ENCODE measurements at regions of chr2 and their contacts with region 1.

Region 1: DNA sequence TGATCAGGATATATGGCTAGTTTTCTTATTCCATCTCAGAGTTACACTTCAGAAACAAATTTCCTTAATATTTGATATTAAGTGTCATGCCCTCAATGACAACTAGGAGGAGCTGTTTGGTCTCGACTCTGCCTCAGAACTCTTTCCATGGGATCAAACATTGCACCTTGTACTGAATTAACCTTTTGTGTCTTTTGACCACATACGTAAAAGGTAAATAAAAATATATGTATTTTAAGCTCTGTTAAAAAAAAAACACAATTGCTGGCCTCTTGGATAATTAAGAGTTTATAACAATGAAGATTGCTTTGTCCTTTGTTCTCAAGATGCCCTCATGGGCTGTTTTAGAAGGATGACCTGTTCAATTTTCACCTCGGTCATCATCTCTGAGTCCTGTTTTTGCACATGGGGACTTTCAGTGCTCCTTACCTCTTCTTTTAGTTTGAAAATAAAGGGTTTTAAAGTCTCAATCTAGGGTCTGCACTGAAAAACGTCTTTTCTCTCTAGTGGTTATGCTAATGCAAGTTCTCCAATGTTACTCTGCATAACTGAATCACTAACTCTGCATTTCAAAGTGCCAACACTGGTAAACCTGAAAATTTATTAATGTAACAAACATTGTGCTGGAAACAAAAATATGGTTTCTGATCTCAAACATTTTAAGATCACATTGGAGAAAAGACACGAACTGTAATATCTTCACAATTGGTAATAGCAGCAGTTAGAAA is 18.8 kb upstream of the FN1 start:
- DNase-seq: peak; percentile 12
- ATAC-seq: peak; percentile 64; the same call in 1 of the 2 replicates
- H3K4me3 ChIP-seq: no peak overlapping the region
- H3K27ac ChIP-seq: no peak overlapping the region
- H3K4me1 ChIP-seq: no peaks in the 10 kb centered on the region
- H3K27me3 ChIP-seq: no peaks in the 10 kb centered on the region
- CTCF ChIP-seq: peak; percentile 64 to 75 (median 72); a peak in 5 of 6 replicates
- POLR2A ChIP-seq: no peak
- RAD21 ChIP-seq: peak; percentile 84

Region 2: DNA sequence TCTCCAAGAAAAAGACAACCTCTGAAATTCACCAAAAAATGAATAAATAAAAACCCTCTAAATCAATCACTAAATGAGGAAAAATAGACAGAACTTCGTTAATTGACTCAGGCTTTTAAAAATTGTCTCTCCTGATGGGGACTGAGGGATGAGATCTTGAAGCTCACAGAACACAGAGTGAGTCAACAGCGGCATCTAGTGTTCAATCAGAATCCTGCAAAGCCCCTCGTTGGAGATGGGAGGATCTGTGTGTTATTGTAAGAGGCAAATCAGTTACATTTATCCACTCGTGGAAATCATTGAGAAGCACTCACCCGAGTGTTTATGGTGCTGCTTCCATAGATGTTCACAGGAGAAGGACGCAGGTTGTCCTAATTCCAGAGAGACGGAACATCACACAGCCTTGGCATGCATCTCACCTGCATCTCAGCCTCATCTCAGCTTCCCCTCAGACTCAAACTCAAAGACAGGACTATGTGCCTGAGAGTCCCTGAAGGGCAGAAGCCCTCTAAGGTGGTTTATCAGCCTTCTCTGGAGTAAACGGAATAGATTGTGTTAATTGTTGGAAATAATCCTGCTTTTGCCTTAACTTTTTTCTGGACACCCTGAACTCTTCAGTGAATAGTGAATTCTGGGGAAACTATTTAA is 476.7 kb after region 1 on chr2:
- CTCF ChIA-PET with region 1: no interaction called
- POLR2A ChIA-PET with region 1: no interaction called
- RAD21 ChIA-PET with region 1: no interaction called
- intact Hi-C with region 1: loop called (anchors 1 kb)
- DNase-seq: peak; percentile 57
- ATAC-seq: peak; percentile 95
- H3K4me3 ChIP-seq: no peak overlapping the region
- H3K27ac ChIP-seq: no peak overlapping the region
- H3K4me1 ChIP-seq: peaks cover 0 to 9% of the 10 kb centered on the region in 2 experiments; a peak in 2 of 4 replicates
- H3K27me3 ChIP-seq: no peaks in the 10 kb centered on the region
- CTCF ChIP-seq: peak; percentile 63 to 99 (median 93); a peak in 5 of 6 replicates
- POLR2A ChIP-seq: no peak
- RAD21 ChIP-seq: peak; percentile 93

Region 3: DNA sequence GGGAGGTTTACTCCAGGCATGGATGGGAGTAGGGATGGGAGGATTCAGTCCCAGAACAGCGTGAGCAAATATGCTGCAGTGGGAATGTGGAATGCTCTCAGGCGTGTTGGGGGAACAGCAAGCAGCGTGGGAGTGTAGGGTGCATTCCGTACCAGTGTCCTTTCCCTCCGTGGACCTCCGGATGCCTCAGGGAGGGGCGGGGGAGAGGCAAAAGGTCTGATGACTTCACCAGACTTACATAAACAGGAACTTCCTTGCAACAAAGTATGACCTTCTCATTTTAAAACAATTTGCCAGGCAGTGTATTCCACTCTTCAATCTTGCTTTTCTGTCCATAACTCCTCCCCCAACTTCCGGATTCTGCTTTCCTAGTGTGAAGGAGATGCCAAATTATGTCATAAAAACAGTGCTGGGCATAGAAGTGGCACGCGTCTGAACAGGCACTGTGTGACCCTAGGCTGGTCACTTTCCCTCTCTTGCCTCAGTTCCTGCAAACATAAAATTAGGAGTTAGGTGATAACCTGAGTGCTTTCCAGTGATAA is 1080.8 kb after region 1 on chr2:
- CTCF ChIA-PET with region 1: no interaction called
- POLR2A ChIA-PET with region 1: no interaction called
- RAD21 ChIA-PET with region 1: no interaction called
- intact Hi-C with region 1: no loop called
- DNase-seq: no peak
- ATAC-seq: no peak
- H3K4me3 ChIP-seq: no peak overlapping the region
- H3K27ac ChIP-seq: no peak overlapping the region
- H3K4me1 ChIP-seq: peaks cover 0 to 10% of the 10 kb centered on the region in 2 experiments; a peak in 1 of 4 replicates
- H3K27me3 ChIP-seq: no peaks in the 10 kb centered on the region
- CTCF ChIP-seq: no peak
- POLR2A ChIP-seq: no peak
- RAD21 ChIP-seq: no peak

Measured in HCT116 (cell line).